Ascending aorta (tissue), 2 donors: ENCODE measurements at regions of chr21 and their contacts with region 1.

Region 1: DNA sequence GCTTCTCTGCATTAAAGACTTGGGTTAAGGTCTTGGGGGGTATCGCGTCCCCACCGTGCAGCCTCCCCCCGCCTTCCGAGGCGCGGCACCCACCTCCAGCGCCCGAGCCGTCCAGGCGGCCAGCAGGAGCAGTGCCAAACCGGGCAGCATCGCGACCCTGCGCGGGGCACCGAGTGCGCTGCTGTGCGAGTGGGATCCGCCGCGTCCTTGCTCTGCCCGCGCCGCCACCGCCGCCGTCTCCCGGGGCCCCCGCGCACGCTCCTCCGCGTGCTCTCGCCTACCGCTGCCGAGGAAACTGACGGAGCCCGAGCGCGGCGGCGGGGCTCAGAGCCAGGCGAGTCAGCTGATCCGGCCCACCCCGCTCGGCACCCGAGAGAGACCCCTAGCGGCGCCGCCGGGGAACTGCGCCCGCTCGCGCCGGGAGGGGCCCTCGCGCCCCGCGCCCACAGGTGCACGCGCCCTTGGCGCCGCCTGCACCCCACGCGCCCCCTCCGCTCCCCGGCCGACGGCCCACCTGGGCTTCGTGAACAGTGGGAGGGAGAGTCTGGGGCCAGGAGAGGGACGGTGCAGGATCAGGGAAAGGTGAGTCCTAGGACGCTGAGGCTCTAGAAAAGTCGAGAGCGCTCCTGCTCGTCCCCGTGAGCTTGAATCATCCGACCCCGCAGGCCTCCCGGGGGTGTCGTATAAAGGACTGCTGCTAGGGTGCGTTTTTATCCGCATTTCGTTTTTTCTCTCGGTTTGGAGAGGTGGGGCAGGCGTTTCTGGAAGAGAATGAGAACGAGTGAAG is at the start of gene APP:
- DNase-seq: peak; percentile 28 to 90
- H3K4me3 ChIP-seq: peak within 1 kb of the TSS; percentile 96 to 98
- H3K27ac ChIP-seq: peak within 1 kb of the TSS; percentile 82 to 84
- H3K4me1 ChIP-seq: peaks cover 0 to 10% of the 10 kb centered on the region in 2 donors
- H3K27me3 ChIP-seq: no peaks in the 10 kb centered on the region
- CTCF ChIP-seq: peak; percentile 70 to 98 (median 71)
- total RNA-seq, gene APP: 350 TPM

Region 2: GRCh38 chr21:25734904-25735645 is 435.6 kb before region 1 on chr21 and contains the starts of genes ATP5PF and GABPA:
- intact Hi-C with region 1: loop called (anchors 5 kb)
- DNase-seq: peak; percentile 92 to 99
- H3K4me3 ChIP-seq: peak within 1 kb of the TSS; percentile 82 to 85
- H3K27ac ChIP-seq: peak within 1 kb of the TSS; percentile 98 to 99
- H3K4me1 ChIP-seq: peaks cover 0 to 24% of the 10 kb centered on the region in 2 donors
- H3K27me3 ChIP-seq: no peaks in the 10 kb centered on the region
- CTCF ChIP-seq: peak in 1 of 3 experiments; percentile 12
- total RNA-seq, gene ATP5PF: 81.8 TPM
- total RNA-seq, gene GABPA: 8.9 TPM

Region 3: GRCh38 chr21:25881525-25882376 is 288.9 kb before region 1 on chr21:
- intact Hi-C with region 1: loop called (anchors 1 kb)
- DNase-seq: peak in 1 of 2 donors; percentile 83
- H3K4me3 ChIP-seq: no peak overlapping the region
- H3K27ac ChIP-seq: no peak overlapping the region
- H3K4me1 ChIP-seq: no peaks in the 10 kb centered on the region
- H3K27me3 ChIP-seq: no peaks in the 10 kb centered on the region
- CTCF ChIP-seq: peak; percentile 78 to 95 (median 93)

Region 4: GRCh38 chr21:25895565-25896205 is 275.0 kb before region 1 on chr21:
- intact Hi-C with region 1: loop called (anchors 1 kb)
- DNase-seq: no peak
- H3K4me3 ChIP-seq: no peak overlapping the region
- H3K27ac ChIP-seq: peak overlapping the region in 1 of 2 donors; percentile 32
- H3K4me1 ChIP-seq: no peaks in the 10 kb centered on the region
- H3K27me3 ChIP-seq: no peaks in the 10 kb centered on the region
- CTCF ChIP-seq: peak; percentile 42 to 66 (median 52)

Region 5: GRCh38 chr21:26112127-26112742 is 58.4 kb before region 1 on chr21:
- intact Hi-C with region 1: loop called (anchors 2 kb)
- DNase-seq: peak in 1 of 2 donors; percentile 69
- H3K4me3 ChIP-seq: no peak overlapping the region
- H3K27ac ChIP-seq: peak overlapping the region in 1 of 2 donors; percentile 53
- H3K4me1 ChIP-seq: peaks cover 4 to 14% of the 10 kb centered on the region in 2 donors
- H3K27me3 ChIP-seq: no peaks in the 10 kb centered on the region
- CTCF ChIP-seq: no peak

Region 6: GRCh38 chr21:26148079-26148839 is 22.4 kb before region 1 on chr21:
- intact Hi-C with region 1: loop called (anchors 2 kb)
- DNase-seq: no peak
- H3K4me3 ChIP-seq: no peak overlapping the region
- H3K27ac ChIP-seq: peak overlapping the region; percentile 76 to 79
- H3K4me1 ChIP-seq: peaks cover 6 to 25% of the 10 kb centered on the region in 2 donors
- H3K27me3 ChIP-seq: no peaks in the 10 kb centered on the region
- CTCF ChIP-seq: no peak

Region 7: GRCh38 chr21:26669215-26669764 is 498.6 kb after region 1 on chr21:
- intact Hi-C with region 1: no loop called
- DNase-seq: no peak
- H3K4me3 ChIP-seq: no peak overlapping the region
- H3K27ac ChIP-seq: no peak overlapping the region
- H3K4me1 ChIP-seq: no peaks in the 10 kb centered on the region
- H3K27me3 ChIP-seq: no peaks in the 10 kb centered on the region
- CTCF ChIP-seq: no peak